ENCODE measurements at regions of chr9 and their contacts with region 1.

Region 1: GRCh38 chr9:73200694-73201452 is 49.2 kb downstream of the ANXA1 start:
- DNase-seq: no peak
- H3K4me3 Mint-ChIP-seq: no peak overlapping the region
- H3K27ac Mint-ChIP-seq: no peak overlapping the region
- H3K4me1 Mint-ChIP-seq: peaks cover 10% of the 10 kb centered on the region
- H3K27me3 Mint-ChIP-seq: no peaks in the 10 kb centered on the region
- CTCF ChIP-seq: peak; percentile 42

Region 2: DNA sequence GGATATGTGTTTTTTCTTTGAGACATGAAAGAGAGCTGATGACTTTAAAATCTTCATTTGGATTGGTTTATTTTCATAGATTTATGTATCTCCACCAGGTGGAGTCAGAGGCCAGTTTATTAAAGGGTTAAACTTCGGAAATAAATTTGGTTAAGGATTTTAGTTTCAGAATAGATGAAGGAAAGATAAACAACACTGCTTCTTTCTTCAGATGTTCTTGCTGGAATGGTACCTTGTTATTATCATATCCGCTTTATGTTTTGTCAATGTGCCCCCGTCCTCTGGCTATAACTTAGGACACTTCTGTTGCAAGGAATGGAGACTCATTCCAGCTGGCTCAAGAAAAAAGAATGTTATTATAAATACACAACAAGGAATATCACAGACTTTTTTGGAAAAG is 329.2 kb before region 1 on chr9:
- CTCF ChIA-PET with region 1: no interaction called
- intact Hi-C with region 1: loop called (anchors 5 kb)
- DNase-seq: peak; percentile 1
- H3K4me3 Mint-ChIP-seq: no peak overlapping the region
- H3K27ac Mint-ChIP-seq: no peak overlapping the region
- H3K4me1 Mint-ChIP-seq: peaks cover 6% of the 10 kb centered on the region
- H3K27me3 Mint-ChIP-seq: no peaks in the 10 kb centered on the region
- CTCF ChIP-seq: peak; percentile 51

Region 3: GRCh38 chr9:73093740-73094379 is 107.0 kb before region 1 on chr9:
- CTCF ChIA-PET with region 1: no interaction called
- intact Hi-C with region 1: no loop called
- DNase-seq: no peak
- H3K4me3 Mint-ChIP-seq: no peak overlapping the region
- H3K27ac Mint-ChIP-seq: no peak overlapping the region
- H3K4me1 Mint-ChIP-seq: no peaks in the 10 kb centered on the region
- H3K27me3 Mint-ChIP-seq: no peaks in the 10 kb centered on the region
- CTCF ChIP-seq: no peak

Region 4: GRCh38 chr9:73239570-73240267 is 38.8 kb after region 1 on chr9:
- CTCF ChIA-PET with region 1: no interaction called
- intact Hi-C with region 1: no loop called
- DNase-seq: no peak
- H3K4me3 Mint-ChIP-seq: no peak overlapping the region
- H3K27ac Mint-ChIP-seq: no peak overlapping the region
- H3K4me1 Mint-ChIP-seq: no peaks in the 10 kb centered on the region
- H3K27me3 Mint-ChIP-seq: no peaks in the 10 kb centered on the region
- CTCF ChIP-seq: no peak

Region 5: GRCh38 chr9:73451003-73451402 is 250.1 kb after region 1 on chr9:
- CTCF ChIA-PET with region 1: no interaction called
- intact Hi-C with region 1: no loop called
- DNase-seq: no peak
- H3K4me3 Mint-ChIP-seq: no peak overlapping the region
- H3K27ac Mint-ChIP-seq: no peak overlapping the region
- H3K4me1 Mint-ChIP-seq: no peaks in the 10 kb centered on the region
- H3K27me3 Mint-ChIP-seq: no peaks in the 10 kb centered on the region
- CTCF ChIP-seq: no peak

Region 6: DNA sequence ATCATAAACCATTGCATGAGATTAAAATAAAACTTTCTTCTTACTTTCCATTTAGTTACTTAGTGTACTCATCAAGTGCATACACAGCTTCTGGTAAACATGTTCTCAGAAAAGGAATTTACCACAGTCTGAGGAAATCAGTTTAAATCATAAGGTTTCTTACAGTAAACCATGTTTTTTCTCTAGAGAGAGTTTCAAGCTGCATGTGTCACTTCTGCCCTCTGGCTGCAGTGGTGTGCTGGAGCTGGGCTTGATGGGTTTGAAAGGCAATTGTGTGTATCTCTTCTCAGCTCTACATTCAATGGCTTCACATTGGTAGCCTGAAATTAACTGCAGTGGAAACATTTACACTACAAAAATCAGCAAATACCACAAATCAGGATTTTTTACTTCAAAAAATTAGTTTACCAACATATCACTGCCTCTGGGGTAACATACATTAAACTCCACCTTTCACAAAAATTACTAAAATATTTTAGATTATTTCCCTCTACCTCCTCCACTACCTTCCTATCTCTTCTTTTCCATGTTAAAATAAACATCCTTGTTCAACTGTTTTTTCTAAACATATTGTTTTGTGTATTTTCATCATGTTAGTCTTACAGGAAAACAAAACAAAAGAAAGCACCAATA is 365.1 kb after region 1 on chr9:
- CTCF ChIA-PET with region 1: interaction called, 6 read pairs
- intact Hi-C with region 1: loop called (anchors 1 kb)
- DNase-seq: peak; percentile 41
- H3K4me3 Mint-ChIP-seq: no peak overlapping the region
- H3K27ac Mint-ChIP-seq: no peak overlapping the region
- H3K4me1 Mint-ChIP-seq: no peaks in the 10 kb centered on the region
- H3K27me3 Mint-ChIP-seq: no peaks in the 10 kb centered on the region
- CTCF ChIP-seq: no peak

Region 7: DNA sequence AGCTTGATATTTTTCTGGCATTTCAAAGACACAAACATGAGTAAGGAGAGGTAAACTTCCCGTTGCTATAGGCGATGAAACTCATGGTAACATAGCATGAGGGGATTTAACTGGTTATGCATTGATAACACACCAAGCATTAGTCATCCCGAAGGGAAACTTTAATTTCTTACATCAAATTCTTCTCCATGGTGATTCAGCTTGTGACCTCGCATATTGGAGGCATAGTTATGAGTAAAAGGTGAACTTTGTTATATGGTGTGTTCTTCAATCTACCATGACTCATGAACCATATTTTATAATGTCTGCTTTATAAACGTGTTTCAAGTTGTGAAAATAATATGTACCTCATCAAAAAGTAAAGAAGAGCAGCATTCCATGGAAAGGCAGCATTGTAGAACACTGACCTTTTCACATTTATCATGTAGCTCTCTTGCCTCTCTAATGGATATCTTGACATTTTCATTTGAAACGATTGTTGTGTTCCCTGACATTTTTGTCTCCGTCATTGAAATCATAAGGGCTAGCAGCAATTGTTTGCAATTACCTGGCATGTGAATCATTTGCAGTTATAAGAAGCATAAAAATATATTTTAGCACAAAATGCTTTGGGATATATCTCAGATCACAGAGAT is 442.6 kb after region 1 on chr9:
- CTCF ChIA-PET with region 1: no interaction called
- intact Hi-C with region 1: no loop called
- DNase-seq: peak; percentile 8
- H3K4me3 Mint-ChIP-seq: no peak overlapping the region
- H3K27ac Mint-ChIP-seq: peak overlapping the region; percentile 39
- H3K4me1 Mint-ChIP-seq: no peaks in the 10 kb centered on the region
- H3K27me3 Mint-ChIP-seq: no peaks in the 10 kb centered on the region
- CTCF ChIP-seq: no peak

Region 8: DNA sequence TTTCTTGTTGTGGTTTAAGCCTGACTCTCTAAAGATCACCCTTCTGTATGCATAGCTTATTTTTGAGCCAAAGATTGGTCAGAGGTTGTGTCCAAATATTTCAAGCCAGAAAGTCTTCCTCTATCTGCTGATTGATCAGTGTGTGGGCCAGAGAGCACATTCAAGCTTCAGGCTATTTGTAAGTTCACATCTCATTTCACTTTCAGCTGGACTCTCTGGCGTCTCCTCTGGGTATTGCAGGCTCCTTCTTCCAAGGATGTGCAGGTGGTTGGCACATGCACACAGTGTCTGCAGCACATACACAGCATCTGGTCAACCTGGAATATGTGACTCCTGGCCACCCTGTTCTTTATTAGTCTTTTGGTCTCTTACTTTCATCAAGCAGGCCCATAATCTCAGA is 466.8 kb after region 1 on chr9:
- CTCF ChIA-PET with region 1: interaction called, 3 read pairs
- intact Hi-C with region 1: loop called (anchors 2 kb)
- DNase-seq: peak; percentile 7
- H3K4me3 Mint-ChIP-seq: no peak overlapping the region
- H3K27ac Mint-ChIP-seq: no peak overlapping the region
- H3K4me1 Mint-ChIP-seq: peaks cover 9% of the 10 kb centered on the region
- H3K27me3 Mint-ChIP-seq: no peaks in the 10 kb centered on the region
- CTCF ChIP-seq: no peak

Region 9: DNA sequence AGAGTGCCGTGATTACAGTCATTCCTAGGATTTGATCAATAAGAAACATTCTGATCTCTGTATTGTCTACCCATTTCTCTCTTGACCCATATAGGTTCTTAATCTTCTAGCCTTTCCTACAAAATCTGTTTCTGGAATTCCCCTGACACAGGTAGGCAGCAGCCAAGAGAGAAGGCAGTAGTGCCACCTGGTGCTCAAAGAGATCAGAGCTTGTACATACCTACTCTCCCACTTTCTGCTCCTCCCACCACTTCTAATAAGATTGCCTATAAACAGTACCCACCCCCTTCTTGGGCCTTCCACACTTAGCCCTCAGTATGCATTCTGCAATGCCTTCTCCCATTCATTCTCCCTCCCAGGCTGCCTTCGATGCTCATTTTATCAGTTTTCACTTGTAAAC is 1178.8 kb after region 1 on chr9:
- CTCF ChIA-PET with region 1: interaction called, 5 read pairs
- intact Hi-C with region 1: loop called (anchors 5 kb)
- DNase-seq: peak; percentile 55
- H3K4me3 Mint-ChIP-seq: no peak overlapping the region
- H3K27ac Mint-ChIP-seq: no peak overlapping the region
- H3K4me1 Mint-ChIP-seq: no peaks in the 10 kb centered on the region
- H3K27me3 Mint-ChIP-seq: no peaks in the 10 kb centered on the region
- CTCF ChIP-seq: no peak

Region 10: GRCh38 chr9:74570879-74571512 is 1370.1 kb after region 1 on chr9:
- CTCF ChIA-PET with region 1: no interaction called
- intact Hi-C with region 1: loop called (anchors 5 kb)
- DNase-seq: peak; percentile 8
- H3K4me3 Mint-ChIP-seq: no peak overlapping the region
- H3K27ac Mint-ChIP-seq: no peak overlapping the region
- H3K4me1 Mint-ChIP-seq: no peaks in the 10 kb centered on the region
- H3K27me3 Mint-ChIP-seq: no peaks in the 10 kb centered on the region
- CTCF ChIP-seq: no peak